Heart left ventricle (tissue), 16 donors: ENCODE measurements at regions of chr14 and their contacts with region 1.

Region 1: GRCh38 chr14:36320200-36320896 is at the start of gene MBIP:
- DNase-seq: peak; percentile 87 to 96 (median 93)
- ATAC-seq: peak; percentile 100
- H3K4me3 ChIP-seq: peak within 1 kb of the TSS; percentile 76 to 93 (median 86)
- H3K27ac ChIP-seq: peak within 1 kb of the TSS; percentile 34 to 84 (median 70)
- H3K4me1 ChIP-seq: peaks cover 0 to 26% (median 17%) of the 10 kb centered on the region in 12 donors
- H3K27me3 ChIP-seq: peaks cover 0 to 10% (median 0%) of the 10 kb centered on the region in 9 donors
- CTCF ChIP-seq: no peak
- POLR2A ChIP-seq: no peak
- total RNA-seq, gene MBIP: 4.8 to 17.1 (median 9.1) TPM

Region 2: GRCh38 chr14:35826218-35826951 is 494.0 kb before region 1 on chr14 and contains the start of gene BRMS1L:
- intact Hi-C with region 1: loop called in 1 of 10 experiments (anchors 10 kb)
- DNase-seq: peak; percentile 98 to 99 (median 99)
- ATAC-seq: peak; percentile 98
- H3K4me3 ChIP-seq: peak within 1 kb of the TSS; percentile 68 to 97 (median 81)
- H3K27ac ChIP-seq: peak within 1 kb of the TSS; percentile 94 to 100 (median 97)
- H3K4me1 ChIP-seq: peaks cover 0 to 14% (median 8%) of the 10 kb centered on the region in 12 donors
- H3K27me3 ChIP-seq: no peaks in the 10 kb centered on the region
- CTCF ChIP-seq: peak in 6 of 12 donors; percentile 4 to 43 (median 27)
- POLR2A ChIP-seq: peak; percentile 62 to 95
- total RNA-seq, gene BRMS1L: 5.3 to 14.8 (median 11.2) TPM

Region 3: DNA sequence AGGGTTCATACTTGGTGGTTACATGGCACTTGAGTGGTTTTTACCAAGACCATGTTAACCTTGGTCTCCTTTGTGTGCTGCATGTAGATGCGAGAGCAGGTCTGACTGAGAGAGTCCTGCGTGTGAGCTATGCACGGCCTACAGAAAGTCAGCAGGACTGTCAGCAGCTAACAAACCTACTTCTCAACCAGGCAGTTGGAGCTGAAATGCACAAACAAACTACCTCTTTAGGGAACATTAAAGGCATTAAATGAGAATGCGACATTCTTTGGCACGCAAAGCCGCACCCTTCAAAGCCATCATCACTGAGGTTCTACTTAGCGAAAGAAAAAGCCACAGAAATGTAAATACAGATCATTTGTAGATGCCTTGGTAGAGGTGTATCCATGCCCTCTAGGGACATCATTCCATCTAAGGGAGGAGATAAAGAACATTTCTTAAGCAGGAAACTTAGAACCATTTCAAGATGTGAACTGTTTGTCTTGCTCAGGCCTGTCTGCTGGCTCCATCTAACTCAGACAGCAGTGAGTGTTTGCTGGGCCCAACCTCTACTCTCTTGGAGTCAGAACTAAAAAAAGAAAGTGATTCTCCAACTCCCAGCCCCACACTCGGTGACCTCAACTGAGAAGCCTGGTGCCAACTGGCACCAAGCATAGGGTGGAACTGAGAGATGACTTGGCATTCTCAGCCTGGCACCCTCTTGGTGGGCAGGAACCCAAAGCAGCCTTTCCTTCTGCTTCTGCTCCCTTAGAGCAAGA is 63.5 kb after region 1 on chr14:
- intact Hi-C with region 1: loop called in 1 of 10 experiments (anchors 5 kb)
- DNase-seq: peak; percentile 60 to 84 (median 67)
- ATAC-seq: peak; percentile 99 to 100 (median 100)
- H3K4me3 ChIP-seq: no peak overlapping the region
- H3K27ac ChIP-seq: peak overlapping the region in 9 of 12 donors; percentile 40 to 73 (median 64)
- H3K4me1 ChIP-seq: peaks cover 0 to 13% (median 0%) of the 10 kb centered on the region in 12 donors
- H3K27me3 ChIP-seq: no peaks in the 10 kb centered on the region
- CTCF ChIP-seq: no peak
- POLR2A ChIP-seq: no peak

Region 4: DNA sequence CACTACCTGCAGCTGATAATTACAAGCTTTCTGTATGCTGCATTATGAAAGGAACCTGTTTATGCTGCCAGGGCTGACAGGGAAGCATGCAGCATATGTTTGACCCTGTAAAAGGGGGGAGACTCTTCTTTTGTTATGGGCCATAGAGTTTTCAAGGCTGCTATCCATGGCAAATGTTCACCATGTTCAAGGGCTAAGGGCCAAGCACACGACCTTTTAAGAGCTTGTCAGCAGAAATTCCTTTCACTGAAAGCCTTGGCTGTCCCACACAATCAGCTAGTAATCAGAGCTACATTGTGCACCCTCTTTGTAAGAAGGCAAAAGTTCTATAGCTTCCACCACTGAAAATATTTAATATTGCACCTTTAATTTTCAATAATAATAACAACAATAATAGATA is 74.2 kb after region 1 on chr14:
- intact Hi-C with region 1: no loop called
- DNase-seq: no peak
- ATAC-seq: peak in 3 of 4 donors; percentile 66 to 73 (median 66)
- H3K4me3 ChIP-seq: no peak overlapping the region
- H3K27ac ChIP-seq: no peak overlapping the region
- H3K4me1 ChIP-seq: peaks cover 0 to 5% (median 0%) of the 10 kb centered on the region in 12 donors
- H3K27me3 ChIP-seq: no peaks in the 10 kb centered on the region
- CTCF ChIP-seq: no peak
- POLR2A ChIP-seq: no peak